Mammary epithelial cell (primary cell): ENCODE measurements at regions of chr20 and their contacts with region 1.

Region 1: GRCh38 chr20:44692932-44693476 is 22.2 kb upstream of the CCN5 start:
- DNase-seq: peak; percentile 92
- H3K4me3 ChIP-seq: no peak overlapping the region
- H3K27ac ChIP-seq: peak overlapping the region; percentile 16
- H3K4me1 ChIP-seq: peaks cover 14% of the 10 kb centered on the region
- H3K27me3 ChIP-seq: no peaks in the 10 kb centered on the region
- CTCF ChIP-seq: no peak

Region 2: DNA sequence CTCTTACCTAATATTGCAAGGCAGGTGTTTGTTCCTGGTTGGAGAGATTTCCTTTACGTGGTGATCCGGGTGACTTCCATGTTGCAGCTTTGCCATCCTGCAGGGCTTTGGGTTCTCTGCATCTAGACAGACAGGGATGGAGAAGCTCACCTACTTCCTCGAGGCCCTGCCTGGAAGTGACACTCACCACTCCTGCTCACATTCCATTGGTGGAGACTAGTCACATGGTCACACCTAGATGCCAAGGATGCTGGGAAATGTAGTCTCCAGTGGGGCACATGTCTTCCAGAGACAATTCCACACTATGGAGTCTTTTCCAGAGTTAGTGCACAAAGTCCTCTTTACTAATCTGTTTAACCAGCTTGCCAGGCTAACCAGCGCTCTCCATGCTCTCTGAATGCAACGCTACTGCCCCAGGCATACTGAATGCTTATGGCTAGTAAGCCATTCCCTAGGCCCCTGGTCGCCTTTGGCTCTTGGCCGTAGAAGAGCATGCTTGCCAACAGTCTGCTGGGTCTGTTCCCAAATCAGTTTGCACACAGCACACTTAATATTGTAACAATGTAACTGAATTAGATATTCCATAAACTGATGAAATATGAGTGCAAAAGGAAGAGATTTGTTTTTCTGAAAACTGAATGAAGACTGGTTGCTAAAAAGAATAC is 45.9 kb after region 1 on chr20:
- CTCF ChIA-PET with region 1: no interaction called
- dilution Hi-C with region 1: loop called (anchors 5 kb)
- in situ Hi-C with region 1: loop called in 1 of 2 experiments (anchors 5 kb)
- intact Hi-C with region 1: no loop called
- DNase-seq: peak; percentile 73
- H3K4me3 ChIP-seq: no peak overlapping the region
- H3K27ac ChIP-seq: no peak overlapping the region
- H3K4me1 ChIP-seq: peaks cover 4% of the 10 kb centered on the region
- H3K27me3 ChIP-seq: no peaks in the 10 kb centered on the region
- CTCF ChIP-seq: no peak

Region 3: GRCh38 chr20:44780226-44780625 is 87.2 kb after region 1 on chr20:
- CTCF ChIA-PET with region 1: no interaction called
- dilution Hi-C with region 1: no loop called
- in situ Hi-C with region 1: no loop called
- intact Hi-C with region 1: no loop called
- DNase-seq: peak; percentile 33
- H3K4me3 ChIP-seq: no peak overlapping the region
- H3K27ac ChIP-seq: no peak overlapping the region
- H3K4me1 ChIP-seq: no peaks in the 10 kb centered on the region
- H3K27me3 ChIP-seq: no peaks in the 10 kb centered on the region
- CTCF ChIP-seq: no peak

Region 4: GRCh38 chr20:44849703-44850102 is 156.7 kb after region 1 on chr20:
- CTCF ChIA-PET with region 1: no interaction called
- dilution Hi-C with region 1: no loop called
- in situ Hi-C with region 1: no loop called
- intact Hi-C with region 1: no loop called
- DNase-seq: no peak
- H3K4me3 ChIP-seq: no peak overlapping the region
- H3K27ac ChIP-seq: no peak overlapping the region
- H3K4me1 ChIP-seq: no peaks in the 10 kb centered on the region
- H3K27me3 ChIP-seq: no peaks in the 10 kb centered on the region
- CTCF ChIP-seq: peak in 1 of 2 donors; percentile 20

Region 5: DNA sequence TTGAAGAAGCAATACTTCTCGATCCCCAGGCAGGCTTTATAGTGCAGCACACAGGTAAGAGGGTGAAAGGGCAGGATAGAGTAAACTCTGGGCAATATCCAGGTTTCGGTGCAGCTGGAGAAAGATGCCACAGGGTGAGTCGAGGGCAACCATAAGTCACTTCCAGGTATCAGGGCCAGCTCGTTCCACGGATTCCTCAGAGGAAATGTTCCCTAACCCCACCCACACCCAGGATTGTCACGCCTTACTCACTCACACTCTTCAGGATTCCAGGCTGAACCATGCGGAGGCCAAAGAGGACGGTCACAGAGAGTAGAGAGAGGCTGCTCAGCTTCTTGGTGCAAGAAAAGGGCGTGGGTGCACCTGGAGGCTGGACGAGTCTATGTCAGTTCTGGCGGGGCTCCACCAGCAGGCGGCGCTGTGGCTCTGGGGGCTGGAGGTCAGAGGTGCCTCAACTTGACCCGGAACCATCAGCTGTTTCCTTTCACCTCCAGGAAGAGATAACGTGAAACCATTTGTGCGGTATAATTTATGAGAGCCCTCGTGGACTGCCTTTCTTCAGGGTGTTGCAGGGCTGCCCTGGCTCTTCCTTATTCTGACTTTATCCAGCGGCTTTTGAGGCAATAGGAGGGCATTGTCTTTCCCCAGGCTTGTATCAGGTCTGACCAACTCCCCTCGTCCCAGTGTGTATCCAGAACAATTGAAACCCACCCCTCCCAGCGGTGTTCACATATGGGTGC is 445.7 kb after region 1 on chr20:
- CTCF ChIA-PET with region 1: interaction called, 18 read pairs
- dilution Hi-C with region 1: no loop called
- in situ Hi-C with region 1: no loop called
- intact Hi-C with region 1: no loop called
- DNase-seq: peak; percentile 56
- H3K4me3 ChIP-seq: no peak overlapping the region
- H3K27ac ChIP-seq: no peak overlapping the region
- H3K4me1 ChIP-seq: peaks cover 3% of the 10 kb centered on the region
- H3K27me3 ChIP-seq: no peaks in the 10 kb centered on the region
- CTCF ChIP-seq: peak; percentile 88 to 91